ENCODE measurements at regions of chr5 and their contacts with region 1.

Region 1: DNA sequence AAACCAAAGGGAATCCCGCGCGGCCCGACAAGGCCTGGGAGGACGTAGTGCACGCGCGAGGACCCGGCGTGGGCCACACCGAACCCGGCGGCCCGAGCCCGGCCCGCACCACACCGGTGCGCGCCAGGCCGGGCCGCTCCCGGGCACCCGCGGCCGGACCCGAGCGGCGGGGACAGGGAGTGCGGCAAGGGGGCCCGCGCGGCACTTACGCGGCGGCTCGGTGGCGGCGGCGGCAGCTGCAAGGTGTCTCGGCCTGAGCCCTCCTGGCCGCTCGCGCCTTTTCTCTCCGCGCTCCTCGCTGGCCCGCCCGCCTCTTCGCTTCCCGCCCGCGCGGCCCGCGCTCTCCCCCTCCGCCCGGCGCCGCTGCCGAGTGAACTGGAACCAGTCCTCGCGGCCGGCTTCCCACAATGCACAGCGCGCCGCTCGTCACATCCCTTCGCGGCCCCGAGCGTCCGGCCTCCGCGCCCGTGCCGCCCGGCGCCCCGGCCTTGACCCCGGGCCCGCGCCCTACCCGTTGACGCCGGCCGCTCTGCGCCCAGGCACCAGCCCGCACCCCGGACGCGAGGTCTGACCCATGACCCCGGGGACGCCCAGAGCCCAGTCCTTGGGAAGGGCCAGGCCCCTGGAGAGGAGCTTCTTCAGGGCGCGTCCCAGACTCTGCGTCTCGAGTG is at the start of gene MACROH2A1:
- DNase-seq: peak; percentile 90
- ATAC-seq: peak; percentile 94
- H3K4me3 Mint-ChIP-seq: peak within 1 kb of the TSS; percentile 85
- H3K27ac Mint-ChIP-seq: peak within 1 kb of the TSS; percentile 87
- H3K4me1 Mint-ChIP-seq: peaks cover 48% of the 10 kb centered on the region
- H3K27me3 Mint-ChIP-seq: peaks cover 10% of the 10 kb centered on the region
- total RNA-seq, gene MACROH2A1: 281 to 327 TPM

Region 2: DNA sequence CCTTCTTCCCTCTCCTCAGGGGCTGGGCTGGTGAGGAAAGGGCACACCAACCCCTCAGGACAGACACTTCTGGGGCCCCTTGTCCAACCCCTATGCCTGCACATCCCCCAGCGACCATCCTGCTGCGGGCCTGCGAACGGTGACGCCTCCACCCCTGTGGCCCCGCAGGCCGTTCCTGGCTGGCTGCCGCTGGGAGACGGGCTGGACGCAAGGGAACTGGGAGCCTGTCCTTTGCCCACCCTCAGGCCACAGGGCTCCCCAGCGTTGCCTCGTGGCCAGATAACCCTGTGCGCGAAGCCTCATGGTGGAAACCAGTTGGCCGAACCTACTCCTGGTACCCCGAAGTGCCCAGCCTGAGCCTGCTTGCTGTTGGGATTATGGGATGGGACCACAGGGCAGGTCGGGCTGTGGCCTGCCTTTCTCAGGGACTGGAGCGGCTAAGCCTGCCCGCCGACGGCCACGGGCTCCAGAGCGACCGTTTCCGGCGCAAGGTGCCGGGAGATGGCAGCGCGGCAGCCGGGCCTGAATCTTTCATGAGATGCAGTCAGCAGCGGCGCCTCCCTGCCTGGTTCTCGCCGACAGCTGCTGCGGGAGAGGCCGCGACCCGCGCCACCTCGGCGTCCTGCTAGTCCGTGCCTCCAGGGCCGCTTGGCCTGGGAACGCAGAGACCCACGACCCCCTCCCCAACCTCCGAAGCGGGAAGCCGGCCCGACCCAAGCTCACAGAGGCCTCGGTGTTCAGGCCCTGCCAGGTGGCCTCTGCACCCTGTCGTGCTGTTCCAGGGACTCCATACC is 358.4 kb before region 1 on chr5:
- CTCF ChIA-PET with region 1: no interaction called
- DNase-seq: no peak
- ATAC-seq: no peak
- H3K4me3 Mint-ChIP-seq: no peak overlapping the region
- H3K27ac Mint-ChIP-seq: no peak overlapping the region
- H3K4me1 Mint-ChIP-seq: peaks cover 2% of the 10 kb centered on the region
- H3K27me3 Mint-ChIP-seq: peaks cover 80% of the 10 kb centered on the region

Region 3: GRCh38 chr5:135388860-135389435 is 10.0 kb before region 1 on chr5:
- CTCF ChIA-PET with region 1: no interaction called
- DNase-seq: no peak
- ATAC-seq: no peak
- H3K4me3 Mint-ChIP-seq: no peak overlapping the region
- H3K27ac Mint-ChIP-seq: no peak overlapping the region
- H3K4me1 Mint-ChIP-seq: peaks cover 51% of the 10 kb centered on the region
- H3K27me3 Mint-ChIP-seq: no peaks in the 10 kb centered on the region

Region 4: GRCh38 chr5:135426102-135427082 is 27.4 kb after region 1 on chr5:
- CTCF ChIA-PET with region 1: interaction called, 22 read pairs
- DNase-seq: no peak
- ATAC-seq: peak; percentile 98
- H3K4me3 Mint-ChIP-seq: no peak overlapping the region
- H3K27ac Mint-ChIP-seq: peak overlapping the region; percentile 55
- H3K4me1 Mint-ChIP-seq: peaks cover 13% of the 10 kb centered on the region
- H3K27me3 Mint-ChIP-seq: peaks cover 33% of the 10 kb centered on the region